Activated CD4-positive, alpha-beta T cell treated with anti-CD3 and anti-CD28 coated beads for 36 hours (primary cell): ENCODE measurements at regions of chr18 and their contacts with region 1.

Region 1: GRCh38 chr18:67010916-67011315 is 407.0 kb upstream of the CDH19 start:
- DNase-seq: no peak
- ATAC-seq: peak; percentile 39
- H3K4me3 Mint-ChIP-seq: no peak overlapping the region
- H3K27ac Mint-ChIP-seq: no peak overlapping the region
- H3K4me1 Mint-ChIP-seq: no peaks in the 10 kb centered on the region
- H3K27me3 Mint-ChIP-seq: no peaks in the 10 kb centered on the region

Region 2: DNA sequence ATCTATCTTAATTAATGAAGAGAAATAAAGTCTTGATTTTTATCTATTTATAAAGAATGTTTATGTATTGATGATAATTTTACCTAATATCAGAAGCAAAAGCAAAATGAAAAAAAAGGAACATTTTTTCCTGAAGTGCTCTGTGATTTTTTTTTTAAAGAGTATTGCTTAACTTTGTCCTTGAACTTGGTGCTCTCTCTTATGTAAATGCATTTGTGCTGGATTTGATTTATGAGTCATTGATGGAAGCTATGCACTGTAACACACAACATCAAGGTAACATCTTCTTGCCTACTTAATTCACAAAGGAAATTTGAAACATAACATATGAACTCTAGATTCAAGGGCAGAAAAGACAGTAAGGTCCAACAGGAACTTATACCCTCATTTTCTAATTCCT is 94.1 kb before region 1 on chr18:
- CTCF ChIA-PET with region 1: no interaction called
- POLR2A ChIA-PET with region 1: no interaction called
- intact Hi-C with region 1: no loop called
- DNase-seq: no peak
- ATAC-seq: no peak
- H3K4me3 Mint-ChIP-seq: no peak overlapping the region
- H3K27ac Mint-ChIP-seq: no peak overlapping the region
- H3K4me1 Mint-ChIP-seq: no peaks in the 10 kb centered on the region
- H3K27me3 Mint-ChIP-seq: no peaks in the 10 kb centered on the region

Region 3: GRCh38 chr18:67068608-67069007 is 57.7 kb after region 1 on chr18:
- CTCF ChIA-PET with region 1: no interaction called
- POLR2A ChIA-PET with region 1: no interaction called
- intact Hi-C with region 1: loop called in 1 of 2 experiments (anchors 5 kb)
- DNase-seq: no peak
- ATAC-seq: no peak
- H3K4me3 Mint-ChIP-seq: no peak overlapping the region
- H3K27ac Mint-ChIP-seq: no peak overlapping the region
- H3K4me1 Mint-ChIP-seq: no peaks in the 10 kb centered on the region
- H3K27me3 Mint-ChIP-seq: no peaks in the 10 kb centered on the region